Endothelial cell of umbilical vein (primary cell): ENCODE measurements at regions of chr9 and their contacts with region 1.

Region 1: DNA sequence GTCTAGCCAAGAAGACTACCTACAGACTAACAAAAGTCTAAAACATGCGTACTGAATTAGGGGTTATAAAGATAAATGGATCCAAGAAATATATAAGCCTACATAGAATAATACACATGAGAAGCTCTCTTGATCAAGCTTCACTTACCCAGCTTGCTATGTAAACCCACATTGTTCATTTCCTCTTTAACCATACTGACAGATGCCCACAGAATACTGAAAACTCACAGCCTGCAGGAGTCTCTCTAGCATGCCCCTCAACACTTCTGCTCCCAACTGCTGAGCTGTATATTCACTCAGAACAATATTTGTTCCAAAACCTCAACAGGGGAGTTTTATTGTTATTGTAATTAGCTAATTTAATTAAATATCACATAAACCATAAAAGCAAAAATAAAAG is 52.4 kb downstream of the RFX3 start:
- DNase-seq: peak; percentile 24
- H3K4me3 ChIP-seq: no peak overlapping the region
- H3K27ac ChIP-seq: no peak overlapping the region
- H3K4me1 ChIP-seq: peaks cover 58% of the 10 kb centered on the region
- H3K27me3 ChIP-seq: no peaks in the 10 kb centered on the region
- CTCF ChIP-seq: no peak
- POLR2A ChIP-seq: no peak

Region 2: DNA sequence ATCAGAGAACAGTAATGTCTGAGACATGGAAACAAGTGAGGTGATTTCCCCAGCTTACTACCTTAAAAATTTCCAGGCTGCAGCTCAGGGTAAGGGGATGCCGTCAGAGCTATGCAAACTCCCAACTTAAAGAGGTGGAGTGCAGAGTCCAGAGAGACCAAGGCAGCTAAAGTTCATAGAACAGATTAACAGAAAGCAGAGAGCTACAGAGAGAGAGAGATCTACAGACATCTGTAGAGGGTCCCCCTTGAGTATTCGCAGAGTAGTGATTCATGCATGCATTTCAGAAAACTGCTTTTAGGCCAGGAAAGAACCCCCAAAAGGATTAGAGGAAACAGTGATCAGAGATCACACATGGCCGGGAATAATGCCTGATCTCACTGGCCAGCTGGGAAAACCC is 323.3 kb before region 1 on chr9:
- CTCF ChIA-PET with region 1: no interaction called
- POLR2A ChIA-PET with region 1: no interaction called
- dilution Hi-C with region 1: no loop called
- intact Hi-C with region 1: no loop called
- DNase-seq: no peak
- H3K4me3 ChIP-seq: no peak overlapping the region
- H3K27ac ChIP-seq: no peak overlapping the region
- H3K4me1 ChIP-seq: no peaks in the 10 kb centered on the region
- H3K27me3 ChIP-seq: no peaks in the 10 kb centered on the region
- CTCF ChIP-seq: no peak
- POLR2A ChIP-seq: no peak

Region 3: DNA sequence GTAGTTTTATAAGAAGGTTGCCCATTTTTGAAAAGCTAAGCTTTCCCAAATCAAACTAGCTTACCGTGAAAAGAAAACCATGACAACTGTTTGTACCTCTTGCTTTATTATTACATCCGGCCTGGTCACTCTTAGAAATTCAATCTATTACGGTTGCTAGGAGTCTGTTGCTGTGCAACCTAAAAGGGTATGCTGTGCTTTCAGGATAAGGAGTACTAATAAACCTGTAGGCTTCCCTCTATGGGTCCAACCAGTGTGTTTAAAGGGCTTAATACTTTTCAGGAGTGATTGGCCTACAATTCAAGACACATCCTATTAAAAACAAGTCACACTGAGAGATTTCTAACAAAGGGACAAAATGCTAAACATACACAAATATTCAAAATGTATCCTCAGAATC is 25.3 kb after region 1 on chr9:
- CTCF ChIA-PET with region 1: interaction called, 9 read pairs
- POLR2A ChIA-PET with region 1: no interaction called
- dilution Hi-C with region 1: no loop called
- intact Hi-C with region 1: loop called (anchors 1 kb)
- DNase-seq: no peak
- H3K4me3 ChIP-seq: no peak overlapping the region
- H3K27ac ChIP-seq: no peak overlapping the region
- H3K4me1 ChIP-seq: peaks cover 22% of the 10 kb centered on the region
- H3K27me3 ChIP-seq: no peaks in the 10 kb centered on the region
- CTCF ChIP-seq: no peak
- POLR2A ChIP-seq: no peak

Region 4: DNA sequence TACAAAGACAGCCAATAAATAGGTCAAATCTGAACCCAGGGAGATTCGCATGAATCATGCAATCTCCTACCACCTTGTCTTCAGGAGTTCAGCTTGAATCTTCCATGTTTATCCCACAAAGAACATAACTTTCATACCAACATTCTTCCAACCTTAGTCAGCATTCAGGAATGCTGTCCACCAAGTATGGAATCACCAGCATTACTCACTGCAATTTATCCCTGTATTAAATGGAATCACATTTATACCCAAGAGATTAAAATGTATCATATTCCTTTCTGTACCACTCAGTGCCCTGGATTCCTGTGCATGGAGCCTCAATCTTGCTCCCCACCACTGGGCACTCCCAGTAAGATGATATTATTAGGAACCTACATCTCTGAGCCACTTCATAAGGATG is 663.8 kb after region 1 on chr9:
- CTCF ChIA-PET with region 1: no interaction called
- POLR2A ChIA-PET with region 1: no interaction called
- dilution Hi-C with region 1: no loop called
- intact Hi-C with region 1: loop called (anchors 5 kb)
- DNase-seq: peak; percentile 88
- H3K4me3 ChIP-seq: no peak overlapping the region
- H3K27ac ChIP-seq: peak overlapping the region; percentile 55
- H3K4me1 ChIP-seq: peaks cover 22% of the 10 kb centered on the region
- H3K27me3 ChIP-seq: no peaks in the 10 kb centered on the region
- CTCF ChIP-seq: no peak
- POLR2A ChIP-seq: no peak

Region 5: DNA sequence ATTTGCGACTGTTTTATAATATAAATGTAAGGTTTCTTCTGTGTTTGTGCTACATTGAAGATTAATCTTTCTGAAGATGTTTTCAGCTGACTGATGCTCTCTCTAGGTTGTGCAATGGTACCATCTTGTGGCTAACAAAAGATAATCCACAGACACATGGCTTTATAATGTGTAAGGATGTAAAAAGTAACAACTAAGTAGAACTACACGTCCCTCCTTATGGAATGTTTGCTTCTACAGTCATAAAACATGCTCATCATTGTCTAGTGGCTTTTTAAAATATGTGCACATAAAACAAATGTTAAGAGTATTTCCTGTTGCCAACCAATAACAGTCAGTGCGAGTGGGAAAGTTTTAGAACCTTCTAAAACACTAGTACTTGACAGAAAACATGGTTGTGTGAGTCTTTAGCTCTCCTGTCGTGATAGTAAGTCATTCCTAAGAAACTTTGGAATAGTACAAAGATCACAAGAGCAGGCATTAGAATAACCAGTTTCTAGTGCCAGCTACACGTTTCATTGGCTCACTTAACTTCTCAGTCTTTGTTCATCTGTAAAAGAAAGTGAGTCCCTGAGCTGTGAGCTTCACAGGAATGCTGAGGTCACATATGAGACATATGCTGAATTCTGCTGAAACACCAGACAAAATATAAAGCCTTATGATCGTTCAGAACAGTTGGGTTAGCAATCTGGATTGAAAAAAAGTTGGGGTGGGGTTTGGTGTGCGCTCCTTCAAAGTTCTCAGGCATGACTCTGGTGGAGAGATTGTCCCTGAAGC is 902.2 kb after region 1 on chr9:
- CTCF ChIA-PET with region 1: interaction called, 8 read pairs
- POLR2A ChIA-PET with region 1: no interaction called
- dilution Hi-C with region 1: no loop called
- intact Hi-C with region 1: loop called (anchors 2 kb)
- DNase-seq: peak; percentile 47
- H3K4me3 ChIP-seq: no peak overlapping the region
- H3K27ac ChIP-seq: no peak overlapping the region
- H3K4me1 ChIP-seq: no peaks in the 10 kb centered on the region
- H3K27me3 ChIP-seq: peaks cover 4 to 10% of the 10 kb centered on the region in 2 experiments
- CTCF ChIP-seq: peak; percentile 18 to 23
- POLR2A ChIP-seq: no peak